IMR-90 (cell line): ENCODE measurements at regions of chr5 and their contacts with region 1.

Region 1: GRCh38 chr5:93058309-93058708 is 522.7 kb downstream of the NR2F1-AS1 start:
- DNase-seq: peak; percentile 92
- ATAC-seq: peak; percentile 89
- H3K4me3 ChIP-seq: no peak overlapping the region
- H3K27ac ChIP-seq: no peak overlapping the region
- H3K4me1 ChIP-seq: peaks cover 7% of the 10 kb centered on the region
- H3K27me3 ChIP-seq: no peaks in the 10 kb centered on the region
- CTCF ChIP-seq: no peak
- POLR2A ChIP-seq: no peak
- RAD21 ChIP-seq: no peak

Region 2: DNA sequence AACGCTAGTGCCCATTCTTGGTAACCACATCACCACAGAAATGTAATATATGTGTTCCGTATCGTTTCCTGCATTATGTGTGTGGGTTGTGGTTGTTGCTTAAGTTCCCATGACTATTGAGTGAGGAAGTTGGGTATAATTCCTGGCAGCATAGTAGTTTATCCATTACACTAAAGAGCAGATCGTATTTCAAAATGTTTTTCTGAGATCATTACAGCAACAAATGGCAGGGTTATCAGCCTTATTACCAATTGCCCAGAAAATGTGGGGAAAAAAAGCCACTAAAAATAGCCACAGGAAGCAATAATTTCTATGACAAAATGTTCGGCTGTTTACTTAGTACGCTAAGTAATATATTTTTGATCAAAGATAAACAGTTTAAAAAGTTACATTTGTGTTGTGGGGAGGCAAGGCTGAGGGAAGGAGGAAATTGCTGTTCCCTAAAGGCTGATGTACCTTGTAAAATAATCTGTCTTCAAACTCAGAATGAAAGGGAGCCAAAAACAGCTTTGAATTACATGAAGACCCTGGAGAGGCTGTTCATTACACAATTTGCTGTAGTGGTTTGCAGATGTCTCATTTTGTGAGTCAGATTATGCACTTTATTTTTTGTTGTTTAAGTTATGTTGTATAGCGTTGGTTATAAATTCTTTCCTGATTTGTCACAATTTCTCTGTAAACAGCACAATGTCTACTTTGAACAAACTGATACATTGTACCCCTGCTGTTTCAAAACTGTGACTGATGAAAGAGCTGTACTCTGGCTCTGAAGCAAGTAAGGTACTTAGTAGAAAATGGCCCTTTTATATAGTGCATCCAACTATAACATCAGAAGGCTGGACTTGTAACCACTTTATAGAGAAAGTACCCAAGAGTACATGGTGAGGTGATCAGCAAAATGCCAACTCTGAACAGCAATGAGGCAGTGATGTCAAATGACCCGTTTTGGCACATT is 505.8 kb before region 1 on chr5:
- CTCF ChIA-PET with region 1: no interaction called
- POLR2A ChIA-PET with region 1: no interaction called
- dilution Hi-C with region 1: no loop called
- in situ Hi-C with region 1: no loop called
- intact Hi-C with region 1: loop called (anchors 2 kb)
- DNase-seq: peak; percentile 99
- ATAC-seq: peak; percentile 83
- H3K4me3 ChIP-seq: no peak overlapping the region; the same call in 1 of the 2 replicates
- H3K27ac ChIP-seq: peak overlapping the region; percentile 53
- H3K4me1 ChIP-seq: no peaks in the 10 kb centered on the region; the same call in 1 of the 2 replicates
- H3K27me3 ChIP-seq: no peaks in the 10 kb centered on the region
- CTCF ChIP-seq: no peak
- POLR2A ChIP-seq: no peak
- RAD21 ChIP-seq: peak; percentile 24; the same call in 1 of the 2 replicates

Region 3: DNA sequence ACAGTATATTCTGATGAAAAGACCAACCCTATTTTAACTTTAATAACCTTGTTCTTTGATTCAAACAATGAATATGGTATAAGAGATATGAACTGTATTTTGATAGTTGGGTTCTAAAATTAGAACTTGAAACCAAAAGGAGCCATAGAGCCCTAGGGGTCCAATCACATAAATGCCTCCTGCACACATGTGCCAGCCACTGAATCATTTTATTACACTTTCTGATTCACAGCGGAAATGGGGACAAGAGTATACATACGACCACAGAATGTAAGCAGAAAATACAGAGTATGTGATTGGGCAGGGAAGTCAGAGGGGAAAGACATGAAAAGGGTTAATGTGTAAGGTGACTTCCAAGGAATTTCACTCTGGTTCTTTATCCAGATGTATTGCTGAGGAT is 477.5 kb before region 1 on chr5:
- CTCF ChIA-PET with region 1: no interaction called
- POLR2A ChIA-PET with region 1: no interaction called
- dilution Hi-C with region 1: no loop called
- in situ Hi-C with region 1: no loop called
- intact Hi-C with region 1: no loop called
- DNase-seq: peak; percentile 3
- ATAC-seq: no peak
- H3K4me3 ChIP-seq: no peak overlapping the region
- H3K27ac ChIP-seq: no peak overlapping the region
- H3K4me1 ChIP-seq: no peaks in the 10 kb centered on the region
- H3K27me3 ChIP-seq: no peaks in the 10 kb centered on the region
- CTCF ChIP-seq: no peak
- POLR2A ChIP-seq: no peak
- RAD21 ChIP-seq: no peak

Region 4: GRCh38 chr5:92769978-92770377 is 288.3 kb before region 1 on chr5:
- CTCF ChIA-PET with region 1: interaction called, 7 read pairs
- POLR2A ChIA-PET with region 1: no interaction called
- dilution Hi-C with region 1: no loop called
- in situ Hi-C with region 1: no loop called
- intact Hi-C with region 1: loop called (anchors 2 kb)
- DNase-seq: peak; percentile 86
- ATAC-seq: peak; percentile 98
- H3K4me3 ChIP-seq: no peak overlapping the region
- H3K27ac ChIP-seq: peak overlapping the region; percentile 54; the same call in 1 of the 2 replicates
- H3K4me1 ChIP-seq: 0 out of 2 replicates have a peak, but pooled peaks cover 4% of the 10 kb centered on the region
- H3K27me3 ChIP-seq: no peaks in the 10 kb centered on the region
- CTCF ChIP-seq: no peak
- POLR2A ChIP-seq: no peak
- RAD21 ChIP-seq: no peak

Region 5: GRCh38 chr5:92916036-92916435 is 142.3 kb before region 1 on chr5:
- CTCF ChIA-PET with region 1: no interaction called
- POLR2A ChIA-PET with region 1: no interaction called
- dilution Hi-C with region 1: no loop called
- in situ Hi-C with region 1: no loop called
- intact Hi-C with region 1: loop called (anchors 5 kb)
- DNase-seq: peak; percentile 44
- ATAC-seq: peak; percentile 49
- H3K4me3 ChIP-seq: no peak overlapping the region
- H3K27ac ChIP-seq: no peak overlapping the region
- H3K4me1 ChIP-seq: peaks cover 2% of the 10 kb centered on the region; the same call in 1 of the 2 replicates
- H3K27me3 ChIP-seq: no peaks in the 10 kb centered on the region
- CTCF ChIP-seq: peak; percentile 44
- POLR2A ChIP-seq: no peak
- RAD21 ChIP-seq: peak; percentile 43

Region 6: GRCh38 chr5:92956886-92957285 is 101.4 kb before region 1 on chr5:
- CTCF ChIA-PET with region 1: interaction called, 12 read pairs
- POLR2A ChIA-PET with region 1: no interaction called
- dilution Hi-C with region 1: no loop called
- in situ Hi-C with region 1: no loop called
- intact Hi-C with region 1: no loop called
- DNase-seq: no peak
- ATAC-seq: no peak
- H3K4me3 ChIP-seq: no peak overlapping the region
- H3K27ac ChIP-seq: no peak overlapping the region
- H3K4me1 ChIP-seq: no peaks in the 10 kb centered on the region
- H3K27me3 ChIP-seq: no peaks in the 10 kb centered on the region
- CTCF ChIP-seq: no peak
- POLR2A ChIP-seq: no peak
- RAD21 ChIP-seq: no peak

Region 7: DNA sequence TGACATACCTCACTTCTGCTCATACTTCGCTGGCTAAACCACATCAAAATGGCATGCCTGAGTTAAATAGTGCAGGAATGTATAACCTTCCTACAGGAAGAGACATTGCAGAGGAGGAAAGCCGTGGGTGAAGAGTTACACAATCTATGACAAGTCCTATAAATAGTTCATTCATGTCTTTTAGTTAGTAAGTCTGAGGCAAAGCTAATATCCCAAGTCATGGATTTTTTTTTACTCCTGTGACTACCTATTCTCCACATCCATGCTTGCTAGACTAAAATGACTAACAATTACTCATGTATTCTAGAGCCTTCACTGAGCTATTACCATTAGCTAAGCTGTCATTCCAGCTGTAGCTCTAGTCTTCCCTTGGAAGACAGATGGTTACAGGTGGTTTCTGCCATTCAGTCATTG is 131.4 kb after region 1 on chr5:
- CTCF ChIA-PET with region 1: no interaction called
- POLR2A ChIA-PET with region 1: no interaction called
- dilution Hi-C with region 1: no loop called
- in situ Hi-C with region 1: no loop called
- intact Hi-C with region 1: loop called (anchors 5 kb)
- DNase-seq: peak; percentile 97
- ATAC-seq: peak; percentile 54
- H3K4me3 ChIP-seq: no peak overlapping the region
- H3K27ac ChIP-seq: no peak overlapping the region
- H3K4me1 ChIP-seq: peaks cover 7% of the 10 kb centered on the region
- H3K27me3 ChIP-seq: no peaks in the 10 kb centered on the region
- CTCF ChIP-seq: no peak
- POLR2A ChIP-seq: no peak
- RAD21 ChIP-seq: peak; percentile 9; the same call in 1 of the 2 replicates